Ascending aorta (tissue), 2 donors: ENCODE measurements at regions of chrX and their contacts with region 1.

Region 1: GRCh38 chrX:41275661-41276609 is 58.0 kb upstream of the DDX3X start:
- DNase-seq: peak in 1 of 2 donors; percentile 70
- H3K4me3 ChIP-seq: peak overlapping the region; percentile 41 to 69
- H3K27ac ChIP-seq: peak overlapping the region; percentile 5 to 52
- H3K4me1 ChIP-seq: peaks cover 0 to 7% of the 10 kb centered on the region in 2 donors
- H3K27me3 ChIP-seq: no peaks in the 10 kb centered on the region
- CTCF ChIP-seq: peak; percentile 9 to 50 (median 23)

Region 2: GRCh38 chrX:41180194-41180908 is 95.6 kb before region 1 on chrX:
- intact Hi-C with region 1: no loop called
- DNase-seq: peak in 1 of 2 donors; percentile 74
- H3K4me3 ChIP-seq: no peak overlapping the region
- H3K27ac ChIP-seq: no peak overlapping the region
- H3K4me1 ChIP-seq: peaks cover 0 to 3% of the 10 kb centered on the region in 2 donors
- H3K27me3 ChIP-seq: no peaks in the 10 kb centered on the region
- CTCF ChIP-seq: peak; percentile 15 to 79 (median 78)

Region 3: GRCh38 chrX:41333744-41334259 is 57.9 kb after region 1 on chrX and contains the start of gene DDX3X:
- intact Hi-C with region 1: loop called (anchors 5 kb)
- DNase-seq: peak; percentile 60 to 93
- H3K4me3 ChIP-seq: peak within 1 kb of the TSS; percentile 82 to 99
- H3K27ac ChIP-seq: peak within 1 kb of the TSS; percentile 99 to 100
- H3K4me1 ChIP-seq: peaks cover 0 to 11% of the 10 kb centered on the region in 2 donors
- H3K27me3 ChIP-seq: no peaks in the 10 kb centered on the region
- CTCF ChIP-seq: peak; percentile 28 to 63 (median 47)
- total RNA-seq, gene DDX3X: 89.3 TPM

Region 4: DNA sequence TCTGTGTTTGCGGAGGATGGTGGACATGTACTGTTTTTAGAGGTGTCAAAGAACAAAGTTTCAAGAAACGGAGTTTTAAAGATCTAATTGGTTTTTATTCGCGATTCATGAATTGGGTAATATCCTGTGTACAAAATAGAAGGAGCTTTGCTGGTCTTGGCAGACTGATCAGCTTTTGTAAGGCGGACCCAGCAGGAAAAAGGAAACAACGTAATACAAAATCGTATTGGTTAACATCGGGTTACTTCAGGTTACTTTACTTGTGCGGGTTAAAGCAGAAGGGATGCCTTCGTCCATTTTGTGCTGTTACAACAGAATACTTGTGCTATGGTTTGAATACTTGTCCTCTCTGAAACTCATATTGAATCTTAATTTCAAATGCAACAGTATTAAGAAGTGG is 159.8 kb after region 1 on chrX:
- intact Hi-C with region 1: loop called (anchors 10 kb)
- DNase-seq: no peak
- H3K4me3 ChIP-seq: no peak overlapping the region
- H3K27ac ChIP-seq: no peak overlapping the region
- H3K4me1 ChIP-seq: no peaks in the 10 kb centered on the region
- H3K27me3 ChIP-seq: no peaks in the 10 kb centered on the region
- CTCF ChIP-seq: no peak

Region 5: DNA sequence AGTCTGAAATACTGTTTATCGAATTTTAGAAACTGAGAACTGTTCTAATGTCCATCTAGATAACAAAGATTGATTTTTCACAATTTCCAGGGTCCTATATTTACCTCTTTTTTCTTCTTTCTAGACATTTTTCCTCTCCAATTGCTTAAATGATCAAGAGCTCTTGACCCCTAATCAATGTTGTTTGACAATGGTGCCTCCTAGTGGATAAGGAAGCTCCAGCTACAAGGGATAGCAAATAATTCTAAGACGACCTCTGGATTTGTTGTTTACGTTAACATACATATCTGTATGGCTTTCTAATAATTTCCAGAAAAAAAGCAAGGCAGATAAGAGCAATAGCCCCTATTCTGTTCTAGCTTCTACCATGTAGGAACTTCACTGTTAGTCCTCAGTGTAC is 483.9 kb after region 1 on chrX:
- intact Hi-C with region 1: loop called (anchors 10 kb)
- DNase-seq: no peak
- H3K4me3 ChIP-seq: no peak overlapping the region
- H3K27ac ChIP-seq: no peak overlapping the region
- H3K4me1 ChIP-seq: no peaks in the 10 kb centered on the region
- H3K27me3 ChIP-seq: no peaks in the 10 kb centered on the region
- CTCF ChIP-seq: peak in 2 of 3 experiments; percentile 43 to 50